OCI-LY7 (cell line): ENCODE measurements at regions of chr19 and their contacts with region 1.

Region 1: GRCh38 chr19:52248241-52248640 is 21.1 kb upstream of the ZNF766 start:
- DNase-seq: peak; percentile 28
- H3K4me3 ChIP-seq: no peak overlapping the region
- H3K27ac ChIP-seq: no peak overlapping the region
- H3K4me1 ChIP-seq: no peaks in the 10 kb centered on the region
- CTCF ChIP-seq: peak; percentile 72

Region 2: DNA sequence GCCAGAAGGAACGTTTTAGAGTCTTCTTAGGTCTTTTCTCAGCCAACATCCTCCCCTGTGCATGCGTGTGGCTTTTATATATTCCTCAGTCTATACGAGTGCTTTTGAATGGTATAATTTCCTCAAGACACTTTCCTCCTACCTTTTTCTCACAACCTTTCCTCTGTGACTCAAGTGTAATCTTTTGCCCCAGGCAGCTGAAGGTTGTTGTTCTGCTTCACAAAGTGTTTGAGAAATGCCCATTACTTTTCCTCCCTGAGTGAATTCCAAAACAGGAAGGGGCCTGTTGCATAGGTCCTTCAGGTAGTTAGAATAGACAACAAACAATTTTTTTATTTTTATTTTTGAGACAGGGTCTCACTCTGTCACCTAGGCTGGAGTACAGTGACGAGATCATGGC is 315.1 kb before region 1 on chr19:
- CTCF ChIA-PET with region 1: no interaction called
- POLR2A ChIA-PET with region 1: no interaction called
- intact Hi-C with region 1: no loop called
- DNase-seq: no peak
- H3K4me3 ChIP-seq: no peak overlapping the region
- H3K27ac ChIP-seq: no peak overlapping the region
- H3K4me1 ChIP-seq: no peaks in the 10 kb centered on the region
- CTCF ChIP-seq: no peak

Region 3: GRCh38 chr19:52343548-52343947 is 95.3 kb after region 1 on chr19:
- CTCF ChIA-PET with region 1: no interaction called
- POLR2A ChIA-PET with region 1: no interaction called
- intact Hi-C with region 1: no loop called
- DNase-seq: peak; percentile 79
- H3K4me3 ChIP-seq: no peak overlapping the region
- H3K27ac ChIP-seq: no peak overlapping the region
- H3K4me1 ChIP-seq: no peaks in the 10 kb centered on the region
- CTCF ChIP-seq: peak; percentile 83

Region 4: DNA sequence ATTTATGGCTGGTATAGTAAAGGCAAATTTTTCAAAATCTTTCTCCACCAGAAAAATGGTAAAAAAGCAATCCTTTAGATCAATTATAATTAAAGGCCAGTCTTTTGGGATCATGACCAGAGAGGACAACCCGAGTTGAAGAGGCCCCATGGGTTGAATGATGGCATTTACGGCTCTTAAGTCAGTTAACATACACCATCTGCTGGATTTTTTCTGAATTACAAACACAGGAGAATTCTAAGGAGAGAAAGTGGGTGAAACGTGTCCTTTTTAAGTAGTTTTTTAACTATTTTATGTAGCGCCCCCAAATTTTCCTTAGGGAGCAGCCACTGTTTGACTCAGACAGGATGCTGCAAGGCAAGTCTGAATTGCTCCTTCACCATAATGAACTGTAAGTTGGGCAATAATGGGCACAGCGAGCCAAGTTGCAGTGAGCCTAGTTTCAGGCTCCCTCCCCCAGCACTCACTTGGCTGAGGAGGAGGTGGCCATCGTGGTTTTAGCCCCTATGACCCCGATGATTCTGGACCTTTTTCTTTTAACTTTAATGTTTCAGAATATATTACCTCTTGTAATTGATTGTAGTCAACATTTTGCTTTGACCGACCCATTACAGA is 500.2 kb after region 1 on chr19:
- CTCF ChIA-PET with region 1: no interaction called
- POLR2A ChIA-PET with region 1: no interaction called
- intact Hi-C with region 1: loop called (anchors 10 kb)
- DNase-seq: peak; percentile 66
- H3K4me3 ChIP-seq: no peak overlapping the region
- H3K27ac ChIP-seq: no peak overlapping the region
- H3K4me1 ChIP-seq: no peaks in the 10 kb centered on the region
- CTCF ChIP-seq: peak; percentile 79

Region 5: GRCh38 chr19:52880895-52881389 is 632.7 kb after region 1 on chr19:
- CTCF ChIA-PET with region 1: no interaction called
- POLR2A ChIA-PET with region 1: no interaction called
- intact Hi-C with region 1: no loop called
- DNase-seq: no peak
- H3K4me3 ChIP-seq: no peak overlapping the region
- H3K27ac ChIP-seq: no peak overlapping the region
- H3K4me1 ChIP-seq: no peaks in the 10 kb centered on the region
- CTCF ChIP-seq: no peak